HEK293T (cell line): ENCODE measurements at regions of chr17 and their contacts with region 1.

Region 1: GRCh38 chr17:46212634-46213435 is 19.6 kb upstream of the KANSL1 start:
- DNase-seq: peak; percentile 76

Region 2: DNA sequence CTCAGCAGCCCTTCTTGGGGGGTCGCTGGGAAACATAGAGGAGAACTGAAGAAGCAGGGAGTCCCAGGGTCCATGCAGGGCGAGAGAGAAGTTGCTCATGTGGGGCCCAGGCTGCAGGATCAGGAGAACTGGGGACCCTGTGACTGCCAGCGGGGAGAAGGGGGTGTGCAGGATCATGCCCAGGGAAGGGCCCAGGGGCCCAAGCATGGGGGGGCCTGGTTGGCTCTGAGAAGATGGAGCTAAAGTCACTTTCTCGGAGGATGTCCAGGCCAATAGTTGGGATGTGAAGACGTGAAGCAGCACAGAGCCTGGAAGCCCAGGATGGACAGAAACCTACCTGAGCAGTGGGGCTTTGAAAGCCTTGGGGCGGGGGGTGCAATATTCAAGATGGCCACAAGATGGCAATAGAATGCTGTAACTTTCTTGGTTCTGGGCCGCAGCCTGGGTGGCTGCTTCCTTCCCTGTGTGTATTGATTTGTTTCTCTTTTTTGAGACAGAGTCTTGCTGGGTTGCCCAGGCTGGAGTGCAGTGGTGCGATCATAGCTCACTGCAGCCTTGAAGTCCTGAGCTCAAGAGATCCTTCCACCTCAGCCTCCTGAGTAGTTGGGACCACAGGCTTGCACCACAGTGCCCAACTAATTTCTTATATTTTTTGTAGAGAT is 210.4 kb before region 1 on chr17:
- CTCF ChIA-PET with region 1: interaction called, 24 read pairs
- POLR2A ChIA-PET with region 1: no interaction called
- DNase-seq: peak; percentile 80

Region 3: GRCh38 chr17:46193151-46193625 is 19.6 kb before region 1 on chr17 and contains the start of gene KANSL1:
- CTCF ChIA-PET with region 1: interaction called, 24 read pairs
- POLR2A ChIA-PET with region 1: interaction called, 3 read pairs
- DNase-seq: peak; percentile 94

Region 4: GRCh38 chr17:46199379-46199778 is 13.5 kb before region 1 on chr17:
- CTCF ChIA-PET with region 1: interaction called, 24 read pairs
- POLR2A ChIA-PET with region 1: no interaction called
- DNase-seq: no peak